GM12878 (cell line): ENCODE measurements at regions of chr11 and their contacts with region 1.

Region 1: DNA sequence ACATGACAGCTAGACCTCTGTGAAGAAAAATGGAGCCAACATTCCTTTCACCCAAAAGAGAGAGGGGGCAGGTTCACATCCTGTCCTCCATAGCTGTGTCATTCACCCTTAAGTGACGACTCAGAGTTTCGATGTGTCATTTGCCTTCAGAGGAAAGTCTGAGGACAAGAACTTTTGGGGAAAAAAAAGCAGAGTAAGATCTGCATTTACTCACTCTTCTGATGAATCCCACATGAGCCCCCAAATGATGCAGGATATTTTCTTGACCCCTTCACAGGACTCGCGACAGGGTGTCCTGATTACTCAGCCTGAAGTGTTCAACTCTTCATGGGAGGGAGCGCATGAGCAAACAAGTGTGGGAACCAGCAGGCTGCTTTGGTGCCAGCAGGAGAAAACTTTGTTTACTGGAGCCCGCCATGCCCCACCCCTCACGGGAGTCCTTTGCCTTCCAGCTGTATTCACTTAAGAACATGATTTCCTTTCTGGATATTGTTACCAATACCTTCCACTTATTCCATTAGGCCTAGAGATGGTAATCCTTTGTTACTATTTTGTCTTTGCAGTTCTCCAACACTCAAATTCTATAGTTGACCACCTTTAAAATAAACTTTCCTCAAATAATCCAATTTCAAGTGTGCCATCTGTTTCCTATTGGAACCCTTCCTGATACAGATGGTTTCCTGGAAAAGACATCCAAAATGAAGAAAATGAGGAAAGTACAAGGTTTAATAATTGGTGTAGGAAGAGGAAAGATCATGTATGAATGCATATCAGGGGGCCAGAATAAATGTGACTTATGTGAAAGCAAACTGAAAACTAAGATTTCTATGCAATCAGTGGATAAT is 729.8 kb downstream of the FAM181B start:
- DNase-seq: no peak
- ATAC-seq: no peak
- H3K4me3 ChIP-seq: no peak overlapping the region
- H3K27ac ChIP-seq: no peak overlapping the region
- H3K4me1 ChIP-seq: no peaks in the 10 kb centered on the region
- H3K27me3 ChIP-seq: no peaks in the 10 kb centered on the region
- CTCF ChIP-seq: no peak
- EP300 ChIP-seq: no peak
- POLR2A ChIP-seq: no peak
- RAD21 ChIP-seq: no peak

Region 2: GRCh38 chr11:80886684-80887083 is 1117.2 kb before region 1 on chr11:
- CTCF ChIA-PET with region 1: no interaction called
- POLR2A ChIA-PET with region 1: interaction called, 10 read pairs
- RAD21 ChIA-PET with region 1: no interaction called
- SMC1A ChIA-PET with region 1: no interaction called
- in situ Hi-C with region 1: no loop called
- intact Hi-C with region 1: no loop called
- DNase-seq: no peak
- ATAC-seq: no peak
- H3K4me3 ChIP-seq: no peak overlapping the region
- H3K27ac ChIP-seq: no peak overlapping the region
- H3K4me1 ChIP-seq: no peaks in the 10 kb centered on the region
- H3K27me3 ChIP-seq: no peaks in the 10 kb centered on the region
- CTCF ChIP-seq: no peak
- EP300 ChIP-seq: no peak
- POLR2A ChIP-seq: no peak
- RAD21 ChIP-seq: no peak